Heart left ventricle (tissue), 16 donors: ENCODE measurements at regions of chr2 and their contacts with region 1.

Region 1: DNA sequence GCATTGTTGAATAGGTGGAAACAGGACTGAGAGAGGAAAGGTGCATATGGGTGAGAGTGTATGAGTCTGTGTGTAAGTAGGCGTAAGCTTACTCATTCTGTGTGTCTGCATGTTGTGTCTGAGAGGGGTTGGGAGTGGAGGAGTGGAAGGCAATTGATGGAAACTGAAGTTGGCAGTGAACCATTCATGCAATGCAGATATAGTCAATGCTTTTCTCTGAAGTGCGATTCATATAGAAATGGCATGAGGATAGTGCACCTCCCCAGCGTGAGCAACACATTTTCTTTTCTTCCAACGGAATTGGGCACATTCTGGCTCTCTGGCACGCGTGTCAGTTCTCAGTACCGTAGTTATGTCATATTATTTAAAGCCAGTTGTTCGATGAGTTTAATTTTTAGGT is 250.5 kb downstream of the NYAP2 start:
- DNase-seq: no peak
- ATAC-seq: no peak
- H3K4me3 ChIP-seq: no peak overlapping the region
- H3K27ac ChIP-seq: no peak overlapping the region
- H3K4me1 ChIP-seq: no peaks in the 10 kb centered on the region
- H3K27me3 ChIP-seq: peaks cover 0 to 12% (median 0%) of the 10 kb centered on the region in 9 donors
- CTCF ChIP-seq: no peak
- POLR2A ChIP-seq: no peak

Region 2: GRCh38 chr2:225282858-225283710 is 367.0 kb before region 1 on chr2:
- intact Hi-C with region 1: loop called in 3 of 10 experiments (anchors 10 kb)
- DNase-seq: no peak
- ATAC-seq: no peak
- H3K4me3 ChIP-seq: no peak overlapping the region
- H3K27ac ChIP-seq: no peak overlapping the region
- H3K4me1 ChIP-seq: no peaks in the 10 kb centered on the region
- H3K27me3 ChIP-seq: no peaks in the 10 kb centered on the region
- CTCF ChIP-seq: peak in 9 of 12 donors; percentile 15 to 57 (median 36)
- POLR2A ChIP-seq: no peak

Region 3: GRCh38 chr2:225693259-225693658 is 43.2 kb after region 1 on chr2:
- intact Hi-C with region 1: no loop called
- DNase-seq: no peak
- ATAC-seq: no peak
- H3K4me3 ChIP-seq: no peak overlapping the region
- H3K27ac ChIP-seq: no peak overlapping the region
- H3K4me1 ChIP-seq: no peaks in the 10 kb centered on the region
- H3K27me3 ChIP-seq: no peaks in the 10 kb centered on the region
- CTCF ChIP-seq: no peak
- POLR2A ChIP-seq: no peak